A549 (cell line): ENCODE measurements at regions of chr5 and their contacts with region 1.

Region 1: DNA sequence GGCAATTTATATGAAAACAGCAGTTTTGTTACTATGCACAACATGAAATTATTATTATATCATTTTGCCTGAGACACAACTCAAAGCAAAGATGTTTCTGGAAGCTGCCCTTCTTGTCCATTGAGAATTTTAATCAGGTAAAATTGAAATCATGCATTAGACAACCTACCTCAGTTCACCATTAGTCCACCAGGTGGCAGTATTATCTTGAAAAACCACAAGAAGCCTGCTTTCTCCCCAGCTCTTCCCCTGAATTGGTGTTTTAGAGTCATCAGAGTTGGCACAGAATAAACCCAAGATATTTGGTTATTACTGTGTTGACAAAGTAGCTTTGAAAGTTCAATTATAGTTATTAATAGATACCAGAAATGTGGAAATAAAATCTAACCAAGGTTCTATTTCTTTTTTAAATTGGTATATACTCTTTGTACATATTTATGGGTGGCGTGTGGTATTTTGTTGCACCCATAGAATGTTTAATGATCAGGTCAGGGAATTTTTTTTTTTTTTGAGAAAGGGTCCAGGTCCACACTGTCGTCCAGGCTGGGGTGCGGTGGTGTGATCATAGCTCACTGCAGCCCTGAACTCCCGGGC is 25.7 kb downstream of the UTP15 start:
- DNase-seq: peak; percentile 64 to 88
- ATAC-seq: peak; percentile 83 to 90
- H3K4me3 ChIP-seq: no peak overlapping the region
- H3K27ac ChIP-seq: peak overlapping the region; percentile 58 to 70
- H3K4me1 ChIP-seq: peaks cover 27% of the 10 kb centered on the region
- CTCF ChIP-seq: peak; percentile 97
- EP300 ChIP-seq: no peak
- POLR2A ChIP-seq: no peak
- RAD21 ChIP-seq: peak; percentile 97 to 98

Region 2: DNA sequence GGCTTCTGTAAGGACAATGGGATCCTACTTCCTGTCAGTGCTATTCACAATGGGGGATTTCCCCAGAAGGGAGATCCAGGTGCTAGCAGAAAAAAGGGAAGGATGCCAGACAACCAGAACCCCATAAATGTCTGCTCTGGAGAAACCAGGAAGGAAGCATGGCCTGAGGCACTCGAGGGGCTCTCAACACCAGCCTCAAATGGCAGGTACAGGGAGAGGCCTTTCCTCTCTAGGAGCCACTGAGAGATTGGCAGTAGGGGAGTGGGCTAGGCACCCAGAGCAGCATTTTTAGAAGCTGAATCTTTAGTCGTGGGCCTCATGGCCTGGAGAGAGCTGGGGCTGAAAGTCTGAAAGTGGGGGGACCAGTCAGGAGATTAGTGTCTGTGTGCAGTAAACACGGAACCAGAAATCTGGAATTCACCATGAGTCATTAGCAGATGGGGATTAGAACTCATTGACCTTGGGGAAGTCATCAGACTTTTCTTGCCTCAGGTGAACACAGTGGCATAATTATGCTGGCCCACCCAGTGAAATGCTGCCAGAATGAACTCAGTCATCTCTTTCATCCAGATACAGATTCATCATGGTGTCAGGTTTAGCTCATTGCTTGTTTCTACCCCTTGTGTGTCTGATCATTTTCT is 63.1 kb after region 1 on chr5:
- CTCF ChIA-PET with region 1: interaction called, 11 read pairs
- POLR2A ChIA-PET with region 1: no interaction called
- DNase-seq: peak in 1 of 2 experiments; percentile 31
- ATAC-seq: peak; percentile 22 to 44; a peak in 3 of 6 replicates
- H3K4me3 ChIP-seq: no peak overlapping the region
- H3K27ac ChIP-seq: peak overlapping the region; percentile 29 to 78; a peak in 3 of 6 replicates
- H3K4me1 ChIP-seq: peaks cover 32% of the 10 kb centered on the region
- CTCF ChIP-seq: no peak
- EP300 ChIP-seq: no peak
- POLR2A ChIP-seq: no peak
- RAD21 ChIP-seq: no peak

Region 3: GRCh38 chr5:73709536-73710129 is 118.4 kb after region 1 on chr5:
- CTCF ChIA-PET with region 1: interaction called, 20 read pairs
- POLR2A ChIA-PET with region 1: no interaction called
- DNase-seq: no peak
- ATAC-seq: no peak
- H3K4me3 ChIP-seq: no peak overlapping the region
- H3K27ac ChIP-seq: no peak overlapping the region
- H3K4me1 ChIP-seq: peaks cover 12% of the 10 kb centered on the region; the same call in 2 of the 3 replicates
- CTCF ChIP-seq: no peak
- EP300 ChIP-seq: no peak
- POLR2A ChIP-seq: no peak
- RAD21 ChIP-seq: no peak

Region 4: DNA sequence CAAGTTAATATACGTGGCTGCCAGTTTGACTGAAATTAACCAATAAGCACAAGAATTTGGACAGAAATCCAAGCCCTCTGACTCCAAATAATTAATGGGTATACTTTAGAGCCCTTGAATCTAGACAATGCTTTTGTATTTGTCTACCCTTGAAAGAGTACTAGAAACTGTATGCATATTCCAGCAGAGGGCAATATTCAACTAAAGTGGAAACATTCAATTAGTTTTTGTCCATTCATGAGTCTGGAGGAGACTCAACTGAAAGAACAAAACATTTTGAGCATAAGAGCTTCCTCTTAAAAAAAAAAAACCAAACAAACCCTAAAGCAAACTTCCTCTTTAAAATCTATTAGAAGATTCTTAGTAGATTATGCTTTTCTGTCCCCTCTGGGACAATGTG is 192.6 kb after region 1 on chr5:
- CTCF ChIA-PET with region 1: interaction called, 315 read pairs
- POLR2A ChIA-PET with region 1: no interaction called
- DNase-seq: peak in 1 of 2 experiments; percentile 37
- ATAC-seq: peak; percentile 80 to 82
- H3K4me3 ChIP-seq: no peak overlapping the region
- H3K27ac ChIP-seq: peak overlapping the region in 1 of 2 experiments; percentile 30; a peak in 2 of 6 replicates
- H3K4me1 ChIP-seq: 0 out of 3 replicates have a peak, but pooled peaks cover 4% of the 10 kb centered on the region
- CTCF ChIP-seq: peak; percentile 57
- EP300 ChIP-seq: no peak
- POLR2A ChIP-seq: no peak
- RAD21 ChIP-seq: peak; percentile 43 to 49; a peak in 4 of 5 replicates

Region 5: GRCh38 chr5:73815631-73816030 is 224.4 kb after region 1 on chr5:
- CTCF ChIA-PET with region 1: interaction called, 11 read pairs
- POLR2A ChIA-PET with region 1: no interaction called
- DNase-seq: no peak
- ATAC-seq: no peak; a peak in 2 of 6 replicates
- H3K4me3 ChIP-seq: peak overlapping the region; percentile 50
- H3K27ac ChIP-seq: peak overlapping the region; percentile 70 to 74
- H3K4me1 ChIP-seq: peaks cover 70% of the 10 kb centered on the region
- CTCF ChIP-seq: no peak
- EP300 ChIP-seq: no peak
- POLR2A ChIP-seq: no peak
- RAD21 ChIP-seq: no peak

Region 6: DNA sequence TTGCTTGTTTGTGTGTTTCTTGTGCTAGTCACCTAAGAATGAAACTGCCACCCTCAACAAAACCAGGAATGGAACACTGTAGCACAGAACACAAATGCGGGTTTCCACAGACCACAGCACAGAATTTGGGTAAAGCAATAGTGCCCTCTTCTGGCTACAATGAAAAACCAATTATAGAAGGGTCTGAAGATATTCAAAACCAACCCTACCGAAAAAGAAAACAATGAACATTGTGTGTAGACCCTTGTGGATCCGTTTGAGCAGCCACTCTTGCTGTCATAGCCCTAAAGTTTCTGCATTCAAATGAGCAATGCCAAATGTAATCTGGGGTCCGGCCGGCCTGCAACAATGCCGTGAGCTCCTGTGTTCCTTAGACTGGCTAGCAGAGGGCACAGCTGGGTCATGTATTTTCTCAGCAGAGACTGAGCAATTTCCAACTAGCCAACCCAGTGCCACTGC is 1057.7 kb after region 1 on chr5:
- CTCF ChIA-PET with region 1: interaction called, 10 read pairs
- POLR2A ChIA-PET with region 1: no interaction called
- DNase-seq: peak; percentile 65 to 77
- ATAC-seq: peak; percentile 88 to 96
- H3K4me3 ChIP-seq: no peak overlapping the region
- H3K27ac ChIP-seq: peak overlapping the region in 1 of 2 experiments; percentile 43; a peak in 3 of 6 replicates
- H3K4me1 ChIP-seq: peaks cover 16% of the 10 kb centered on the region
- CTCF ChIP-seq: peak; percentile 95
- EP300 ChIP-seq: no peak
- POLR2A ChIP-seq: no peak
- RAD21 ChIP-seq: peak; percentile 95 to 97